Stomach (tissue), 19 donors: ENCODE measurements at regions of chrX and their contacts with region 1.

Region 1: DNA sequence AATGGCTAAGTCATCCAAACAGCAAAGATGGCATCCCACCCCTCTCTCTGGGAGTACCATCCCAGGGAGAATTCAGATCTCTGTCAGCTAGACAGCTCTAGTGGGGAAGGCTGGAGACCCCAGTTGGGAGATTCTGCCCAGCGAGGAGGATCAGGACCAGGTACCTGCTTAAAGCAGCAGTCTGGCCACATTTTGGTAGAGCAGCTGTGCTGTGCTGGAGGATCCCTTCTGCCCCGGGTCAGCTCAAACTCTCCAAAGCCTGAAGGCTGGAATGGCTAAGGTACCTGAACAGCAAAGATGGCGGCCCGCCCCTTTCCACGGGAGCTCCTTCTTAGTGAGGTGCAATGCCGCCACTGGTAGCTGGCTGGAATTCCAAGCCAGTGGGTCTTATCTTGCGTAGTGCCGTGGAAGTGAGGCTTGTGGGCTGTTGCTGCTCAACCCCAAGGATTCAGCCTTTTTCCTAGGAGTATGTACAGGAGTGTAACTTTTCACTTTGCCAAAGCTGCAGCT is 40.1 kb downstream of the SATL1 start:
- DNase-seq: no peak
- H3K4me3 ChIP-seq: no peak overlapping the region
- H3K27ac ChIP-seq: no peak overlapping the region
- H3K4me1 ChIP-seq: no peaks in the 10 kb centered on the region
- H3K27me3 ChIP-seq: no peaks in the 10 kb centered on the region
- CTCF ChIP-seq: no peak
- EP300 ChIP-seq: no peak
- POLR2A ChIP-seq: no peak

Region 2: GRCh38 chrX:85274333-85274732 is 70.8 kb after region 1 on chrX:
- intact Hi-C with region 1: loop called (anchors 10 kb)
- DNase-seq: no peak
- H3K4me3 ChIP-seq: no peak overlapping the region
- H3K27ac ChIP-seq: no peak overlapping the region
- H3K4me1 ChIP-seq: no peaks in the 10 kb centered on the region
- H3K27me3 ChIP-seq: no peaks in the 10 kb centered on the region
- CTCF ChIP-seq: no peak
- EP300 ChIP-seq: no peak
- POLR2A ChIP-seq: no peak